CD14-positive monocyte (primary cell): ENCODE measurements at regions of chr15 and their contacts with region 1.

Region 1: GRCh38 chr15:59492389-59493377 is 54.7 kb downstream of the FAM81A start:
- DNase-seq: peak; percentile 48 to 67 (median 64)
- H3K4me3 ChIP-seq: no peak overlapping the region
- H3K4me3 Mint-ChIP-seq: no peak overlapping the region
- H3K27ac ChIP-seq: no peak overlapping the region
- H3K27ac Mint-ChIP-seq: no peak overlapping the region
- H3K4me1 ChIP-seq: peaks cover 0 to 5% of the 10 kb centered on the region in 2 donors
- H3K4me1 Mint-ChIP-seq: peaks cover 5% of the 10 kb centered on the region
- H3K27me3 ChIP-seq: no peaks in the 10 kb centered on the region
- H3K27me3 Mint-ChIP-seq: peaks cover 0 to 2% (median 2%) of the 10 kb centered on the region in 3 donors
- CTCF ChIP-seq: peak; percentile 89

Region 2: GRCh38 chr15:58909616-58910015 is 583.1 kb before region 1 on chr15:
- intact Hi-C with region 1: no loop called
- DNase-seq: no peak
- H3K4me3 ChIP-seq: no peak overlapping the region
- H3K4me3 Mint-ChIP-seq: no peak overlapping the region
- H3K27ac ChIP-seq: no peak overlapping the region
- H3K27ac Mint-ChIP-seq: peak overlapping the region in 1 of 7 donors; percentile 15
- H3K4me1 ChIP-seq: no peaks in the 10 kb centered on the region
- H3K4me1 Mint-ChIP-seq: peaks cover 3% of the 10 kb centered on the region
- H3K27me3 ChIP-seq: no peaks in the 10 kb centered on the region
- H3K27me3 Mint-ChIP-seq: no peaks in the 10 kb centered on the region
- CTCF ChIP-seq: no peak

Region 3: GRCh38 chr15:59160880-59161593 is 331.6 kb before region 1 on chr15:
- intact Hi-C with region 1: loop called (anchors 10 kb)
- DNase-seq: no peak
- H3K4me3 ChIP-seq: no peak overlapping the region
- H3K4me3 Mint-ChIP-seq: no peak overlapping the region
- H3K27ac ChIP-seq: no peak overlapping the region
- H3K27ac Mint-ChIP-seq: no peak overlapping the region
- H3K4me1 ChIP-seq: peaks cover 10 to 12% of the 10 kb centered on the region in 2 donors
- H3K4me1 Mint-ChIP-seq: peaks cover 18% of the 10 kb centered on the region
- H3K27me3 ChIP-seq: no peaks in the 10 kb centered on the region
- H3K27me3 Mint-ChIP-seq: peaks cover 0 to 2% (median 1%) of the 10 kb centered on the region in 3 donors
- CTCF ChIP-seq: peak; percentile 59

Region 4: GRCh38 chr15:59247364-59247763 is 245.3 kb before region 1 on chr15:
- intact Hi-C with region 1: loop called (anchors 2 to 5 kb)
- DNase-seq: peak; percentile 34 to 54 (median 52)
- H3K4me3 ChIP-seq: no peak overlapping the region
- H3K4me3 Mint-ChIP-seq: no peak overlapping the region
- H3K27ac ChIP-seq: no peak overlapping the region
- H3K27ac Mint-ChIP-seq: no peak overlapping the region
- H3K4me1 ChIP-seq: peaks cover 4 to 10% of the 10 kb centered on the region in 2 donors
- H3K4me1 Mint-ChIP-seq: peaks cover 11% of the 10 kb centered on the region
- H3K27me3 ChIP-seq: no peaks in the 10 kb centered on the region
- H3K27me3 Mint-ChIP-seq: no peaks in the 10 kb centered on the region
- CTCF ChIP-seq: peak; percentile 70

Region 5: DNA sequence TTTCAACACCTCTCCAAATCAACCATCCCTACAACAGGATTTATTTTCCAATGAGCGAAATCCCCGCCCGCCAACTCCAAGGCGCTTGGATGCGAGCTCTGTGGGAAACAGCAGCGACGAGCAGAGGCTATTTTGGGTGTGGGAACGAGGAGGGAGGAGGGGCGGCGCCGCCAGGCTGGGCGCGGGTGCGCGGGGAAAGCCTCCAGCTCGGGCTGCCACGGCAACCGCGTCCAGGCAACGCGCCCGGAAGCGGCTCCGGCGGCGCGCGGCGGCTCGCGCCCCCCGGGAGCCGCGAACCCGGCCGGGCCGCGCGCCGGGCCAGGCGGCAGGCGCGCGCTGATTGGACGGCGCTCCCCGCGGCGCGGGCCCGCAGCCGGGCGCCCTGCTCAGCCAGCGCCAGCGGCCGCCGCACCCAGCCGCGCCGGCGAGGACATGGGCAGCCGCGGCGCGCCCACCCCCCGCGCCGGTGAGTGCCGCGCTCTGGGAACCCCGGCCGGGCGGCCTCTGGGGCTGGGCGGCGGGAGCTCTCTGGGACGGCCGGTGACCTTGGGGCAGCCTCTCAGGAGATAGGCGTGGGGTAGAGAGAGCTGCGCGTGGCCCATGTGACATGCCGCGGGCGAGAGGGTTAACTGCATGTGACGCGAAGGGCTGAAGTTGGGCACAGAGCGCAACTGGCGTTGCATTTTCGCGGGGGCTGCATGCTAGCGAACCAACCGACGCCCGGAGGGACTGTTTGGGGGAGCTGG is 54.7 kb before region 1 on chr15 and contains the start of gene FAM81A:
- intact Hi-C with region 1: no loop called
- DNase-seq: peak; percentile 27 to 51 (median 33)
- H3K4me3 ChIP-seq: peak within 1 kb of the TSS; percentile 44 to 77 (median 45)
- H3K4me3 Mint-ChIP-seq: peak within 1 kb of the TSS; percentile 86 to 94
- H3K27ac ChIP-seq: no peak within 1 kb of the TSS
- H3K27ac Mint-ChIP-seq: peak within 1 kb of the TSS in 1 of 7 donors; percentile 26
- H3K4me1 ChIP-seq: peaks cover 15 to 16% of the 10 kb centered on the region in 2 donors
- H3K4me1 Mint-ChIP-seq: peaks cover 22% of the 10 kb centered on the region
- H3K27me3 ChIP-seq: peaks cover 33 to 46% of the 10 kb centered on the region in 2 donors
- H3K27me3 Mint-ChIP-seq: peaks cover 40 to 50% (median 48%) of the 10 kb centered on the region in 3 donors
- CTCF ChIP-seq: no peak
- polyA plus RNA-seq, gene FAM81A: 0.40 to 0.66 TPM in 2 of 3 donors, not detected in the other

Region 6: DNA sequence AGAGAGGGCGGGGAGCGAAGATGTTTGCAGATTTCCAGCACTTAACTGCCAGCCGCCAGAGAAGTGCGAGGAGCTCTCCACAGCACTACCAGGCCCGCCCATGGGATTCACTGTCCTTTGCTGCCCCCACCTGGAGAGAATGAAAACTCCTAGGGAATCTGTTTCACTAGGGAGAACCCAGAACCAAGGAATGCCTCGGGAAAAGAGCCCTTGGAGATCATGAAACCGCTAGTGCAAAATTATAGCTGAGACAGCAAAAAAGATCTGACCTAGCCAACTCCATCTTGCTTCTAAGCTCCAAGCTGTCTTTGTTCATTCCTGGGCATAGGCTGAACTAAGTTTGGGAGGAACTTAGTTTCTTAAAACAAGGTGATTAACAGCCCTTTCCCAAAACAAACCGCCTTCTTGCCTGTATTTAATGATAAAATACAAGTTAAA is 36.3 kb after region 1 on chr15:
- intact Hi-C with region 1: no loop called
- DNase-seq: peak; percentile 59 to 76 (median 71)
- H3K4me3 ChIP-seq: no peak overlapping the region
- H3K4me3 Mint-ChIP-seq: no peak overlapping the region
- H3K27ac ChIP-seq: no peak overlapping the region
- H3K27ac Mint-ChIP-seq: peak overlapping the region in 1 of 7 donors; percentile 41
- H3K4me1 ChIP-seq: peaks cover 41 to 44% of the 10 kb centered on the region in 2 donors
- H3K4me1 Mint-ChIP-seq: peaks cover 47% of the 10 kb centered on the region
- H3K27me3 ChIP-seq: no peaks in the 10 kb centered on the region
- H3K27me3 Mint-ChIP-seq: peaks cover 0 to 3% (median 2%) of the 10 kb centered on the region in 3 donors
- CTCF ChIP-seq: peak; percentile 85